Calu3 (cell line): ENCODE measurements at regions of chr3 and their contacts with region 1.

Region 1: GRCh38 chr3:194740859-194741491 is 55.3 kb downstream of the FAM43A start:
- DNase-seq: peak; percentile 81
- H3K4me3 Mint-ChIP-seq: peak overlapping the region; percentile 44
- H3K27ac Mint-ChIP-seq: peak overlapping the region; percentile 69
- H3K4me1 Mint-ChIP-seq: peaks cover 28% of the 10 kb centered on the region
- H3K27me3 Mint-ChIP-seq: no peaks in the 10 kb centered on the region
- CTCF ChIP-seq: no peak

Region 2: DNA sequence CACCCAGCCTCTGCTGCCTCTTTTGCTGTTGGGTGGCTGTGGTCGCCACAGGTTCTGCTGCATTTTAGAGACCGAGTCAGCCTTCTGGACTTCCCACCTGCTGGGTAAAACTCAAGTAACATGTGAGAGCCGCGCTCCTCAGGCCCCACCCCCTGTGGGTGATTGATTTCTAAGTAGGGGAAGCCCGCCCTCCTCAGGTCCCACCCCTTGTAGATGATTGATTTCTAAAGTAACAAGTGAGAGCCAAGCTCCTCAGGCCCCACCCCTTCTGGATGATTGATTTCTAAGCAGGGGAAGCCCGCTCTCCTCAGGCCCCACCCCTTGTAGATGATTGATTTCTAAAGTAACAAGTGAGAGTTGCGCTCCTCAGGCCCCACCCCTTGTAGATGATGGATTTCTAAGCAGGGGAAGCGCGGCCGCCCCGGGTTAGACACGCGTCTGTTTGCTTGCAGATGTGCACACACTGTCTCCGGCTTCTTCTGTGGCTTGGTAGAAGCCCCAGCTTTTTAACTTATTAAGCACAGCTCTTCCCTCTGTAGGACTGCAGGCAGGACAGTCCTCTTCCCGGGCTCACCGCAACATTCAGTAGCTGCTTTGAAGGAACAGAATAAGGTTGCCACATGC is 28.2 kb after region 1 on chr3:
- CTCF ChIA-PET with region 1: interaction called, 3 read pairs
- intact Hi-C with region 1: loop called (anchors 1 kb)
- DNase-seq: peak; percentile 95
- H3K4me3 Mint-ChIP-seq: peak overlapping the region; percentile 74
- H3K27ac Mint-ChIP-seq: peak overlapping the region; percentile 39
- H3K4me1 Mint-ChIP-seq: peaks cover 32% of the 10 kb centered on the region
- H3K27me3 Mint-ChIP-seq: peaks cover 35% of the 10 kb centered on the region
- CTCF ChIP-seq: no peak